Caco-2 (cell line): ENCODE measurements at regions of chr2 and their contacts with region 1.

Region 1: GRCh38 chr2:231361671-231362554 is 33.6 kb upstream of the B3GNT7 start:
- DNase-seq: no peak
- H3K4me3 ChIP-seq: no peak overlapping the region
- H3K4me3 Mint-ChIP-seq: no peak overlapping the region
- H3K27ac Mint-ChIP-seq: no peak overlapping the region
- H3K4me1 ChIP-seq: peaks cover 20% of the 10 kb centered on the region
- H3K4me1 Mint-ChIP-seq: peaks cover 18% of the 10 kb centered on the region
- H3K27me3 ChIP-seq: no peaks in the 10 kb centered on the region
- H3K27me3 Mint-ChIP-seq: no peaks in the 10 kb centered on the region
- CTCF ChIP-seq: no peak

Region 2: DNA sequence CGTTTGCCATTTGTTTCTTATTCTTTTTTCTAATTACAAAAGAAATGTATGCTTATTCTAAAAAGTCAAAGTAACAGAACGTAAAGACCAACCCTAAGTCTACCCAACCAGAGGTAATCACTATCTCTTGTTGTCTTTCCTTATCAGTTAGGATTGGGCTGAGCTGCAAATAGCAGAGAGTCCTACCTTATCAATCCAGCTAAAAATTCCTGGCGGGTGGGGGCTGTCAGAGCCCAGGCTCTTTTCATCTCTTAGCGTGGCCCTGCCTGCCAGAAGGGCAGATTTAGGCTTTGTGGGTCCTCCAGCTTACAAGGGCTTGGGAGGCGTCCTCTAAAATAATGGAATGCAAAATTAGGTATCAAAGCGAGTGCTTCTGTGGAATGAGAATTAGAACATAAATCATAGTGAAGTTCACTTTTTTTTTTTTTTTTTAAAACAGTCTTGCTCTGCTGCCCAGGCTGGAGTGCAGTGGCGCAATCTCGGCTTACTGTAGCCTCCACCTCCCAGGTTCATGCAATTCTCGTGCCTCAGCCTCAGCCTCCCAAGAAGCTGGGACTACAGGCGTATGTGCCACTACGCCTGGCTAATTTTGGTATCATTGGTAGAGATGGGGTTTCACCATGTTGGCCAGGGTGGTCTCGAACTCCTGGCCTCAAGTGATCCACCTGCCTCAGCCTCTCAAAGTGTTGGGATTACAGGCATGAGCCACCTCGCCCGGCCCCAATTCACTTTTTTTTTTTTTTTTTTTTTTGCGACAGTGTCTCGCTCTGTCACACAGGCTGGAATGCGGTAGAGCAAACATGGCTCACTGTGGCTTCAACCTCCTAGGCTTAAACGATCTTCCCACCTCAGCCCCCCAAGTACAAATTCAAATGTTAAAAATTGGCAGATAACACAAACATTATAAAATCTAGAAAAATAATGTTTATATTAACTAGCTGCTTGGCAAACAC is 23.8 kb before region 1 on chr2:
- CTCF ChIA-PET with region 1: no interaction called
- POLR2A ChIA-PET with region 1: interaction called, 14 read pairs
- intact Hi-C with region 1: no loop called
- DNase-seq: peak; percentile 75 to 82
- H3K4me3 ChIP-seq: no peak overlapping the region
- H3K4me3 Mint-ChIP-seq: peak overlapping the region; percentile 24
- H3K27ac Mint-ChIP-seq: peak overlapping the region; percentile 53
- H3K4me1 ChIP-seq: peaks cover 21% of the 10 kb centered on the region; the same call in 1 of the 2 replicates
- H3K4me1 Mint-ChIP-seq: no peaks in the 10 kb centered on the region
- H3K27me3 ChIP-seq: no peaks in the 10 kb centered on the region
- H3K27me3 Mint-ChIP-seq: no peaks in the 10 kb centered on the region
- CTCF ChIP-seq: no peak